MCF 10A (cell line): ENCODE measurements at regions of chr1 and their contacts with region 1.

Region 1: DNA sequence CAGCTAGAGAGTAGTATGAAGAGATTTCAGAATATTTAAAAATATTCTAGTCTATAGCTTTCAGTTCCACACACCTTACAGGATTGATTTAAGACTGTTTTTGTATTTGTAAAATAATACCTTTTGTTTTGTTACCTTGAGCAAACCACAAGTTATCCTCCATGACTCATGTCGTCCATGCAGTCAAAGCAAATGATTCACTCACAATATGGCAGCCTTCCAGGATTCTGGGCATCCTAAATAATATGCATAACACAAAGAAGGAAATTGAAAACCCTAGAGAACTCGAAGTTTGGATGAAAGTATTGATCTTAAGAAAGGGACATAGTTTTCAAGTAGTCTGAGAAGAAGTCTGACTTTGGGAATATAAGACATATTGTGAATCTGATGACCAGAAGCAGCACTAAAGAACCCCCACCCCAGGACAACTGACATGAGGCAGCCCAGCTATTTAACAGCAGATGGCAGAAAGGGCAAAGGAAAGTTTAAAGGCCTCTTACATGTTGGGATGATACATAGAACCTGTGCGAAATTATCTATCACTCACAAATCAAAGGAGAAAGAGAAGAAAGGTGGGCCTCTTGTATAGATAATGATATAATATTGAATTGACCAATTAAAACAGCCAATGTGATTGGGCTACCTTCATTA is 857.9 kb downstream of the BRINP3 start:
- DNase-seq: peak; percentile 100
- H3K4me3 Mint-ChIP-seq: no peak overlapping the region
- H3K27ac Mint-ChIP-seq: peak overlapping the region; percentile 61
- H3K4me1 Mint-ChIP-seq: peaks cover 17% of the 10 kb centered on the region
- H3K27me3 Mint-ChIP-seq: no peaks in the 10 kb centered on the region
- CTCF ChIP-seq: peak; percentile 32

Region 2: DNA sequence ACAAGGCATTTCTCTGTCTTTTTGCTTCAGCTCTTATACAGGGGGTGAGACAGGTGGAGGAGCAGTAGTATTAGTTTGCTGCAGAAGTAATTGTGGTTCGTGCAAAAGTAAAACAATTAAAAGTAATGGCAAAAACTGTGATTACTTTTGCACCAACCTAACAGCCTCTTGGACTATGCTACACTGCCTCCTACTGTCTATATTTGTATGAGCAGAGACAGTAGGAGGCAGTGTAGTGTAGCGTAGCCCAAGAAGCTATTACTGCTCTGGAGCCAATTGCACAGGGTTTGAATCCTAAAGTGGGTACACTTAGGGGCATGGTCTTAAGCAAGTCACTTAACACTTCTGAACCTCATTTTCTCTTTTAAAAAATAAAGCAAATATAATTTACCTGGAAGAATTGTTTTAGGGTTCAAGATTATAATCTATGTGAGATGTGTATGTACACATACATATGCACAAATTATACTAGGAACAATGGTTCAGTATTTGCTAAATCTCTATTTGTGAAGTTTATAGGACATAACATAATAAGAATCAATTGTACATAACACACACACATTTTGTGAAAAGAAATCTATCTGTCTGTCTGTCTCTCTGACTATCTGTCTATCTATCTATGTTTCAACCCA is 754.0 kb after region 1 on chr1:
- CTCF ChIA-PET with region 1: no interaction called
- POLR2A ChIA-PET with region 1: no interaction called
- intact Hi-C with region 1: loop called (anchors 1 kb)
- DNase-seq: peak; percentile 67
- H3K4me3 Mint-ChIP-seq: no peak overlapping the region
- H3K27ac Mint-ChIP-seq: peak overlapping the region; percentile 33
- H3K4me1 Mint-ChIP-seq: no peaks in the 10 kb centered on the region
- H3K27me3 Mint-ChIP-seq: no peaks in the 10 kb centered on the region
- CTCF ChIP-seq: peak; percentile 66

Region 3: GRCh38 chr1:190436615-190437014 is 816.8 kb after region 1 on chr1:
- CTCF ChIA-PET with region 1: no interaction called
- POLR2A ChIA-PET with region 1: no interaction called
- intact Hi-C with region 1: loop called (anchors 1 kb)
- DNase-seq: peak; percentile 72
- H3K4me3 Mint-ChIP-seq: no peak overlapping the region
- H3K27ac Mint-ChIP-seq: no peak overlapping the region
- H3K4me1 Mint-ChIP-seq: no peaks in the 10 kb centered on the region
- H3K27me3 Mint-ChIP-seq: no peaks in the 10 kb centered on the region
- CTCF ChIP-seq: peak; percentile 69